ENCODE measurements at regions of chr17 and their contacts with region 1.

Region 1: GRCh38 chr17:51537996-51538550 is 277.7 kb downstream of the UTP18 start:
- DNase-seq: no peak
- ATAC-seq: no peak
- H3K4me3 ChIP-seq: no peak overlapping the region
- H3K4me3 Mint-ChIP-seq: no peak overlapping the region
- H3K27ac ChIP-seq: no peak overlapping the region
- H3K27ac Mint-ChIP-seq: no peak overlapping the region
- H3K4me1 ChIP-seq: no peaks in the 10 kb centered on the region
- H3K4me1 Mint-ChIP-seq: no peaks in the 10 kb centered on the region
- H3K27me3 ChIP-seq: peaks cover 0 to 3% (median 0%) of the 10 kb centered on the region in 4 experiments
- H3K27me3 Mint-ChIP-seq: peaks cover 16% of the 10 kb centered on the region
- CTCF ChIP-seq: no peak

Region 2: GRCh38 chr17:51298508-51299371 is 239.3 kb before region 1 on chr17:
- CTCF ChIA-PET with region 1: interaction called, 4 read pairs
- POLR2A ChIA-PET with region 1: no interaction called
- intact Hi-C with region 1: loop called (anchors 5 kb)
- DNase-seq: peak; percentile 20
- ATAC-seq: no peak
- H3K4me3 ChIP-seq: no peak overlapping the region
- H3K4me3 Mint-ChIP-seq: no peak overlapping the region
- H3K27ac ChIP-seq: no peak overlapping the region
- H3K27ac Mint-ChIP-seq: no peak overlapping the region
- H3K4me1 ChIP-seq: no peaks in the 10 kb centered on the region
- H3K4me1 Mint-ChIP-seq: no peaks in the 10 kb centered on the region
- H3K27me3 ChIP-seq: no peaks in the 10 kb centered on the region
- H3K27me3 Mint-ChIP-seq: no peaks in the 10 kb centered on the region
- CTCF ChIP-seq: peak; percentile 50

Measured in B cell (primary cell).